ENCODE measurements at regions of chr19 and their contacts with region 1.

Region 1: DNA sequence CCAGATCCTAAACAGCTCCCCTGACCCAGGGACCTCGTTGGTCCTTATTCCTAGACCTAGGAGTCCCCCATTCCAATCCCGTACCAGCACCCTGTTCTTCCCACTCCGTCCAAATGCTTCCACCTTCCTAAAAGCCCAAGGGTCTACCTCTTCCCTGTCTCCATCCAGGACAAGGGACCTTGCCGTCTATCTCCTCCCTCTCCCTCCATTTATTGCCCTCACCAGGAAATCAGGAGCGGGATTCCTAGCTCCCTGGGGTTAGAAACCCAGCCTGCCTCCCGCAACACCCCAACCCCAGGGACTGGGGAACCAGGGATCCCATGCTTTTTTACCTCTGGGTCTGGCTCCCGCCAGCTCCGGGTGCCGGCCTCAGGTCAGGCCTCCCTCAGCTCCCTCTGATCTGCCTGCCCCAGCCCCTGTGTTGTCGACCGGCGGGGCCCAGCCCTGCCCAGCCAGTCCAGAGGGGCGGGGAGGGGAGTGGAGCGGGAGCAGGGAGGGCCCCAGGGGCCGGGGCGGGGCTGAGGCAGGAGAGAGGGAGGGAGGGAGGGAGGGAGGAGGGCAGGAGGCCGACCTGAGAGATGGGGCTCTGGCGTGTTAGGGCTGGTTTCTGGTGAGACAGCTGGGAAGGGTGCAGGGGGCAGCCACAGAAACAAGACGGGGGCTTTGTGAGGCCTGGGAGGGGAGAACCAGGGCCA is at the start of gene B3GNT8:
- DNase-seq: peak; percentile 89 to 90
- ATAC-seq: peak; percentile 84 to 89 (median 86)
- H3K4me3 ChIP-seq: peak within 1 kb of the TSS; percentile 16 to 73 (median 61)
- H3K27ac ChIP-seq: peak within 1 kb of the TSS; percentile 69 to 94 (median 90)
- H3K4me1 ChIP-seq: peaks cover 12 to 93% (median 63%) of the 10 kb centered on the region in 9 donors
- H3K27me3 ChIP-seq: no peaks in the 10 kb centered on the region
- CTCF ChIP-seq: no peak
- total RNA-seq, gene B3GNT8: 6.2 to 11.7 (median 8.8) TPM

Region 2: DNA sequence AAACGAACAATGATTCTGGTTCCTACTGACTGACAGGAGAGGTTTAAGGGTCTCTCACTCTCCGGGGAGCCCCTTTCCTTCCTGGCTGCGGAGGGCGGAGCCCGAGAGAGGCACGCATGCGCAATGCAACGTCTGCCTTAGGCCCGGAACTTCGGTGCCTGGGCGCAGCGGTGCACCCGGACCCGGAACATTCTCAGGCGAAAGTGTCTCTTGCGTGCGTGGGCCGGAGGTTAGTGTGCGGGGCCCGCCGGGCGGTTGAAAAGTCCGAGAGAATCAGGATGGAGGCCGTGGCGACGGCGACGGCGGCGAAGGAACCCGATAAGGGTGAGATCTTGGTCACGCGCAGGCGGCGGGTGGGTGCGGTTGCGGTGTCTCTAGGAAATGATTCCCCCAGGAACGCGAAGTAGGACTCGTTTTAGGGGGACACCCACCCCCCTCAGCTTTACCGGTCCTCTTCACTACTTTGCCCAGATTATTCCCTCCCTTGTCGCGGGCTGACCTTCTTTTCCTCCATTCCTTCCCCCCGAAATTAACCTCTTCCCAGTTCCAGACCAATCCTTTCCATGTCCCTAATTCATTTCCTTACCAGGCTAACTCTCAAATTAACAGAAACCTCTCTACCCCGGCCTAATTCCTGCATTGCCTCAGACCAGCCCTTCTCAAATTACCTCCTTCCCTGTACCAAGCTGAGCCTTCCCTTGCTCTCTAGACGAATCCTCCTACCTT is 116.9 kb before region 1 on chr19 and contains the start of gene CCDC97:
- intact Hi-C with region 1: loop called in 3 of 10 experiments (anchors 5 kb)
- DNase-seq: peak; percentile 88 to 89
- ATAC-seq: peak; percentile 82 to 93 (median 87)
- H3K4me3 ChIP-seq: peak within 1 kb of the TSS; percentile 15 to 84 (median 70)
- H3K27ac ChIP-seq: peak within 1 kb of the TSS; percentile 89 to 99 (median 94)
- H3K4me1 ChIP-seq: peaks cover 6 to 64% (median 39%) of the 10 kb centered on the region in 9 donors
- H3K27me3 ChIP-seq: no peaks in the 10 kb centered on the region
- CTCF ChIP-seq: peak in 2 of 9 donors; percentile 8 to 14
- total RNA-seq, gene CCDC97: 12.6 to 19.2 (median 16.4) TPM

Region 3: DNA sequence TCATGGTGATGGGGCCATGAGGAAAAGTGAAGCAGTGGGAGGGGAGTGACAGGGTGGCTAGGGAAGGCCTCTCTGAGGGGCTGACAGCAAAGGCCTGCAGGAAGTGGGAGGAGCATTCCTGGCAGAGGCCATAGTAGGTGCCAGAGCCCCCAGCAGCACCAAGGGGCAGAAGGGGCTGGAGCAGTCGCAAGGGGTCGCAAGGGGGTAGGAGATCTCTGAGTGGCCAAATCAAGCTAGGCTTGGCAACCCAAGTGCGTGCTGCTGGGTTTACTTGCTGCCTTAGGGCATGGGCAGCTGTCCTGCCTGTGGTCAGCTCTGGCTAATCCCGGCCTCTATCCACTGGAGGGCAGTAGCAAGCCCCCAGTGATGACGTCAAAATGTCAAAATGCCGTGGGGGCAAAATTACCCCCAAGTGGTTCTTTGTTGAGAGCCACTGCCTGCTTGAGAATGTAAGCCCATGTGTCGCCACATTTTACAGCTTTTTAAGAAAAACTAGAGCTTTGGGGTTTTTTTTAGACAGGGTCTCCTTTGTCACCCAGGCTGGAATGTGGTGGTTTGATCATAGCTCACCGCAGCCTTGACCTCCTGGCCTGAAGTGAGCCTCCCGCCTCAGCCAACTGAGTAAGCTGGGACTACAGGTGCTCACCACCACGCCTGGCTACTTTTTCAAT is 105.4 kb before region 1 on chr19:
- intact Hi-C with region 1: loop called in 2 of 10 experiments (anchors 5 to 10 kb)
- DNase-seq: no peak
- ATAC-seq: peak in 1 of 8 donors; percentile 9
- H3K4me3 ChIP-seq: no peak overlapping the region
- H3K27ac ChIP-seq: peak overlapping the region in 9 of 10 donors; percentile 32 to 96 (median 90)
- H3K4me1 ChIP-seq: peaks cover 35 to 58% (median 56%) of the 10 kb centered on the region in 9 donors
- H3K27me3 ChIP-seq: no peaks in the 10 kb centered on the region
- CTCF ChIP-seq: peak; percentile 45 to 80 (median 74)

Region 4: GRCh38 chr19:41363753-41364523 is 63.2 kb before region 1 on chr19 and contains the start of gene B9D2:
- intact Hi-C with region 1: loop called in 3 of 10 experiments (anchors 1 to 10 kb)
- DNase-seq: peak; percentile 96 to 99
- ATAC-seq: peak; percentile 96 to 98 (median 98)
- H3K4me3 ChIP-seq: peak within 1 kb of the TSS; percentile 20 to 89 (median 71)
- H3K27ac ChIP-seq: peak within 1 kb of the TSS; percentile 75 to 99 (median 97)
- H3K4me1 ChIP-seq: peaks cover 2 to 59% (median 15%) of the 10 kb centered on the region in 9 donors
- H3K27me3 ChIP-seq: no peaks in the 10 kb centered on the region
- CTCF ChIP-seq: no peak
- total RNA-seq, gene B9D2: 1.00 to 5.8 (median 2.3) TPM

Region 5: DNA sequence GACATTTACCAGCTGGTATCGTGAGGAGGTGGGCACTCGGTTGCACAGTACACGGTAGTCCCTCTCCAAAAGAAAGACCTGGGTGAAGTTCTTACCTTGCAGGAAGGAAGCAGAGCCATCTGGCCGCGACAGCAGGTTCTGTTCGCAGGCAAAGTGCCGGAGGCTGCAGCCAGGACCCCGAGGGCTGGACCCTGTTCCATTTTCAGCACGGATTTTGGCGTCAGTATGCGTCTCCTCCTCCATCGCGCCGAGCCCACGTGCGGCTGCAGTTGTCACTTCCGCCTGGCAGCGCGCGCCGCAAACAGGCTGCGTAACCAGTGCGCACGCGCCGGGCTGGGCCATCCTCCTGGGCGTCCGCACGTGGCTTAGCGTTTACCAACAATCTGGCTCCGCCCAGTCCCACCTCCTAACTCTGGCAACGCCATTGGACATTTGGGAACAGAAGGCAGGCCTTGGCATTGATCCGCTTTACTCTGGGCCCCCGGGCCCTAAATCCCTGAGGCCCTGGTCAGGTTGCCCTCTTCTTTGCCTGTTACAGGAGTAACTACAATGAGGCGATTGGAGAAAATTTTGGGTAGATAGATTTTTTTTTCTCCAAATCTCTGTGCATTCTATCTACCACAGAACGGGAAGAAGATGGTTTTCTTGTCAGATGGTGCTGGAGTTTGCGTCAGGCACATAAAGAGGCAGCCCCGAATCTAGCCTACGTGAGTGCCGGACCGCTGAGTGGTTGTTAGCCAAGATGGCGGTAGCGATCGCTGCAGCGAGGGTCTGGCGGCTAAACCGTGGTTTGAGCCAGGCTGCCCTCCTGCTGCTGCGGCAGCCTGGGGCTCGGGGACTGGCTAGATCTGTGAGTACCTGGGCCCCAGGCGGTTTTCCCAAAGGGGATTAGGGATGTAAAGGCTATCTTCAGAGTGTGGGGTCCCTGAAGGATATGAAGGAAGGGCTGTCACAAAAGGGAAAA is 29.7 kb before region 1 on chr19 and contains the starts of genes BCKDHA and EXOSC5:
- intact Hi-C with region 1: loop called in 2 of 10 experiments (anchors 5 kb)
- DNase-seq: peak; percentile 99 to 100
- ATAC-seq: peak; percentile 98 to 99 (median 99)
- H3K4me3 ChIP-seq: peak within 1 kb of the TSS; percentile 58 to 96 (median 88)
- H3K27ac ChIP-seq: peak within 1 kb of the TSS; percentile 76 to 95 (median 92)
- H3K4me1 ChIP-seq: peaks cover 14 to 51% (median 36%) of the 10 kb centered on the region in 9 donors
- H3K27me3 ChIP-seq: no peaks in the 10 kb centered on the region
- CTCF ChIP-seq: no peak
- total RNA-seq, gene BCKDHA: 35.5 to 63.0 (median 42.5) TPM
- total RNA-seq, gene EXOSC5: 10.6 to 17.8 (median 13.6) TPM